Naive thymus-derived CD4-positive, alpha-beta T cell (primary cell): ENCODE measurements at regions of chr11 and their contacts with region 1.

Region 1: DNA sequence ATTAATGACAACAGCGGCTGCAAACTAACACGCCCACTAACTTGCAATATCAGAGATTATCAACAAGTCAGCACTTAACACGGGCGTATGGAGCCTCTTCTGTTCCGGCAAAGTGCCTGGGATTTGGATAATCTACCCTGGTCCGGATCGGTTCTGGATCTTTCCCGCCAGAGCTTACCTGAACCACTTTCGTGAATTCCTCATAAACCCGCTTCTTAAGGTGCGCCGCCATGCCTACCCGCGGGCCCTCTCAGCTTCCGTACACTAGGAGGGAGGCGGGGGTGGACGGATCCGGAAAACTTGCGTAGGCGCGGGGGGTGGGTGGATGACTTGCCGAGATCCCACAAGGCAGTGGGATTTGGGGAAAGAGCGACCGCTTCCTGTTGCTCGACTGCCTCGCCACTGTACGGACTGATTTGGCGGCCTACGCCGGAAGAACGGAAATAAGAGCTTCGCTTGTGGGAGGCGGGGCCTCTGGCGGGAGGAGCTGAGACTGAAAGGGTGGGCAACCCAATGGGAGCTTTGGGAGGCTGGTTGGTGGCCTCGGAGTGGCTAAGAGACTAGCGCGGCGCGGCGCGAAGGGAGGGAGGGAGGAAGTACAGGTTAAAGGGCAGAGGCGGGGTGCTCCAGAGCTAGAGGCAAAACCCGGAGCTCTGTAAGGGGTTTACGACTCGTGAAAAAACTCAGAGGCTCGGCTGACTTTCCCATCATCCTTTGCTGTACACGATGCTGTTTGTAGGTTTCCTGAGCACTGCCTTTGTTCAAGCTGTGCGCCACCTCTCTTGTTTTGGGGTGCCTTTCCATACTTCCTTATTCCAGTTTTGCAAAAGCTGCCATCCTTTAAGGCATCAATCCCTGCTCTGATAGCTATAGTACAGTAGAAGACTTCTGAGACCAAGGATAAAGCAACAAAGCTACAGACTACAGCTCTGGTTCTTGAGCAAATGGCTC is at the start of gene INTS4:
- DNase-seq: peak; percentile 88 to 99 (median 99)
- ATAC-seq: peak; percentile 98
- H3K4me3 ChIP-seq: peak within 1 kb of the TSS; percentile 88
- H3K4me3 Mint-ChIP-seq: peak within 1 kb of the TSS; percentile 87 to 96 (median 94)
- H3K27ac ChIP-seq: peak within 1 kb of the TSS; percentile 84
- H3K27ac Mint-ChIP-seq: peak within 1 kb of the TSS; percentile 86 to 99 (median 97)
- H3K4me1 ChIP-seq: peaks cover 16 to 18% of the 10 kb centered on the region in 2 donors
- H3K4me1 Mint-ChIP-seq: peaks cover 10 to 45% (median 28%) of the 10 kb centered on the region in 7 donors
- H3K27me3 ChIP-seq: no peaks in the 10 kb centered on the region
- H3K27me3 Mint-ChIP-seq: no peaks in the 10 kb centered on the region
- total RNA-seq, gene INTS4: 54.4 to 87.0 (median 65.0) TPM

Region 2: GRCh38 chr11:76380967-76381719 is 1613.5 kb before region 1 on chr11 and contains the starts of genes GVQW3 and THAP12:
- CTCF ChIA-PET with region 1: no interaction called
- POLR2A ChIA-PET with region 1: no interaction called
- intact Hi-C with region 1: loop called in 1 of 2 experiments (anchors 2 kb)
- DNase-seq: peak; percentile 96 to 99 (median 98)
- ATAC-seq: peak; percentile 96
- H3K4me3 ChIP-seq: peak within 1 kb of the TSS; percentile 86
- H3K4me3 Mint-ChIP-seq: peak within 1 kb of the TSS; percentile 92 to 98 (median 97)
- H3K27ac ChIP-seq: peak within 1 kb of the TSS; percentile 72
- H3K27ac Mint-ChIP-seq: peak within 1 kb of the TSS; percentile 75 to 98 (median 92)
- H3K4me1 ChIP-seq: peaks cover 22 to 43% of the 10 kb centered on the region in 2 donors
- H3K4me1 Mint-ChIP-seq: peaks cover 51 to 76% (median 69%) of the 10 kb centered on the region in 7 donors
- H3K27me3 ChIP-seq: no peaks in the 10 kb centered on the region
- H3K27me3 Mint-ChIP-seq: no peaks in the 10 kb centered on the region
- total RNA-seq, gene GVQW3: 3.6 to 9.1 (median 6.7) TPM
- total RNA-seq, gene THAP12: 40.3 to 57.9 (median 51.1) TPM

Region 3: DNA sequence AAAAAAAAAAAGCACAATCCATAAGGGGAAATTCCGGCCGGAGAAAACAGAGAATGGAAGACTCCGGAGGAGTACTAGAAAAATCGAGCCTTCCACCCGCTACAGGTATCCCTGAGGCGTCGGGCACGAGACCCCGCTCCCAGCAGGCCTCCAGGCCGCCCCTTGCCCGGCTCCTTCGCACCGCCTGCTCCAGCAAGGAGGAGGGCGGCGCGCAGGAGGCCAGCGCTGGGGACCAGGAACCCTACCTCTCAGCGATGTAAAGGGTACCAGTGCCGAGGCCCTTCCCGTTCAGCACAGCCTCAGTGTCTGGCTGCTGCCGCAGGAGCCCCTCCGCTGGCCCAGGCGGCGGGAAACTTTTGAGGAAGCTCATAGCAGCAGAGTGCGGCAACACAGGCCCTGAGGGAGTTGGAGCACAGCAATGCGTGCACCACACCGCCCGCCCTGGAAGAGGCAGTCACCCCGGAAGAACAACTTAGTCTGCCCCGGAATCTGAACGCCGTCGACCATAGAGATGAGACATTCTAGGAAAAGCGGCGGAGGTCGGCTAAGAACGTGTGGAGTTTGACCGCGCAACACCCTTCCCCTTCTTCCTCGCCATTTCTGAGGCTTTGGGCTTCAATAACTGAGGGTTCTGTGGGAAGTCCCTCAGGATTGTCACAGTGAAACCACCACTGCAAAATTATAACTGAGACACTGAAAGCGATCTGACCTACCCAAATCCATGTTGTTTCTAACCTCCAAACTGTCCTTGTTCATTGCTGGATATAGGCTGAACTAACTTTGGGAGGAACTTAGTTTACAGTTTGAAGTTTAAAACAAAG is 357.1 kb before region 1 on chr11 and contains the start of gene CLNS1A:
- CTCF ChIA-PET with region 1: no interaction called
- POLR2A ChIA-PET with region 1: interaction called, 9 read pairs
- intact Hi-C with region 1: loop called (anchors 1 kb)
- DNase-seq: peak; percentile 53 to 79 (median 75)
- ATAC-seq: peak; percentile 99
- H3K4me3 ChIP-seq: peak within 1 kb of the TSS; percentile 77
- H3K4me3 Mint-ChIP-seq: peak within 1 kb of the TSS; percentile 91 to 97 (median 96)
- H3K27ac ChIP-seq: peak within 1 kb of the TSS; percentile 87
- H3K27ac Mint-ChIP-seq: peak within 1 kb of the TSS; percentile 86 to 98 (median 95)
- H3K4me1 ChIP-seq: peaks cover 7 to 19% of the 10 kb centered on the region in 2 donors
- H3K4me1 Mint-ChIP-seq: peaks cover 34 to 49% (median 44%) of the 10 kb centered on the region in 7 donors
- H3K27me3 ChIP-seq: no peaks in the 10 kb centered on the region
- H3K27me3 Mint-ChIP-seq: no peaks in the 10 kb centered on the region
- total RNA-seq, gene CLNS1A: 82.2 to 149 (median 113) TPM

Region 4: GRCh38 chr11:77851503-77851902 is 143.2 kb before region 1 on chr11:
- CTCF ChIA-PET with region 1: no interaction called
- POLR2A ChIA-PET with region 1: no interaction called
- intact Hi-C with region 1: no loop called
- DNase-seq: no peak
- ATAC-seq: no peak
- H3K4me3 ChIP-seq: no peak overlapping the region
- H3K4me3 Mint-ChIP-seq: no peak overlapping the region
- H3K27ac ChIP-seq: no peak overlapping the region
- H3K27ac Mint-ChIP-seq: no peak overlapping the region
- H3K4me1 ChIP-seq: no peaks in the 10 kb centered on the region
- H3K4me1 Mint-ChIP-seq: peaks cover 0 to 4% (median 0%) of the 10 kb centered on the region in 7 donors
- H3K27me3 ChIP-seq: no peaks in the 10 kb centered on the region
- H3K27me3 Mint-ChIP-seq: no peaks in the 10 kb centered on the region

Region 5: GRCh38 chr11:78079232-78080083 is 84.8 kb after region 1 on chr11 and contains the start of gene NDUFC2:
- CTCF ChIA-PET with region 1: no interaction called
- POLR2A ChIA-PET with region 1: interaction called, 26 read pairs
- intact Hi-C with region 1: loop called (anchors 1 kb)
- DNase-seq: peak; percentile 37 to 73 (median 61)
- ATAC-seq: peak; percentile 90
- H3K4me3 ChIP-seq: peak within 1 kb of the TSS; percentile 99
- H3K4me3 Mint-ChIP-seq: peak within 1 kb of the TSS; percentile 92 to 98 (median 95)
- H3K27ac ChIP-seq: peak within 1 kb of the TSS; percentile 83
- H3K27ac Mint-ChIP-seq: peak within 1 kb of the TSS; percentile 90 to 97 (median 95)
- H3K4me1 ChIP-seq: peaks cover 38 to 43% of the 10 kb centered on the region in 2 donors
- H3K4me1 Mint-ChIP-seq: peaks cover 41 to 68% (median 53%) of the 10 kb centered on the region in 7 donors
- H3K27me3 ChIP-seq: no peaks in the 10 kb centered on the region
- H3K27me3 Mint-ChIP-seq: no peaks in the 10 kb centered on the region
- total RNA-seq, gene NDUFC2: 43.4 to 189 (median 64.7) TPM

Region 6: DNA sequence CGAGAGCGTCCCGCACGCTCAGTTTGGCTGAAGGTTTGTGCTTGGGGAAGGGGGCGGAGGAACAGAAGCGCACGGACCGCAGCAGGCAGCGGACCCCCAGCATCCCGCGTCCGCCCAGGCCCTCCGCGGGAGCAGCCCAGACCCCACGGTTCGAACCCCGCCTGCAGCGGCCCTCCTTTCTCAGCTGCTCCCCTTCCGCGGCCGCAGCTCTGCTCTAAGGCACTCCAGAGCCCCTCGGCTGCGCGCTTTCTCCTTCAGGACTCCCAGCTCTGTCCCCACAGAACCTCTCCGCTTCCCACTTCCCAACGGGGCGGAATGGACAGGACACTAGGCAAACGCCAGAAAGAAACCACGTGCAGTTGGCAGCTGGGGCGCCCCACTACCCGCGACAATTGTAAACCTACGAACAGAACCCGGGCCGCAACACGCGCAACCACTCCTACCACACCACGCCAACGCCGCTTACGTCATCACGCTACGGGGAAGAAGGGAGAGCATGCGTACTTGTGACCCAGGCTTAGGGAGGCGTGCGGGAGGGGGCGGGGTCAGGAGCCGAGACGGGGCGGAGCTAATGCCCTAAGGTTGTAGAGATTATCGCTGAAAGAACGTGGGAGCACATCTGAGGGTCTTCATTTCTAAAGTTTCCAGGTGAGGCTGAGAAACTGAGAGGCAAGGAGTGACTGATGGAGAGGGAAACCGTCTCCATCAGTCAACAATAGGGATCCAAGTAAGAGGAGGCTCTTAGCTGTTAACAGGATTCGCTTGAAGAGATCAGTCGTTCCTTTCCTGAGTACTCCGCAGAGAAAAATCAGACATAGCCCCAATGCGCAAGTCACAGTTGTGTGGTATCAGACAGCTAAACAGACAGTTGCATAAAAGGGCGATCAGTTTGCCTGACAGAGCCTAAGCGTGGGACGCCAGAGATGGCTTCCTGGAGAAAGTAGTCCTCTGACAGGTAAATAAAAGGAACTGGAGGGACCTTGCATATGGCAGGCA is 580.0 kb after region 1 on chr11 and contains the start of gene NARS2:
- CTCF ChIA-PET with region 1: no interaction called
- POLR2A ChIA-PET with region 1: interaction called, 9 read pairs
- intact Hi-C with region 1: loop called (anchors 1 kb)
- DNase-seq: peak; percentile 89 to 97 (median 96)
- ATAC-seq: peak; percentile 99
- H3K4me3 ChIP-seq: peak within 1 kb of the TSS; percentile 70
- H3K4me3 Mint-ChIP-seq: peak within 1 kb of the TSS; percentile 93 to 100 (median 98)
- H3K27ac ChIP-seq: peak within 1 kb of the TSS; percentile 96
- H3K27ac Mint-ChIP-seq: peak within 1 kb of the TSS; percentile 86 to 99 (median 98)
- H3K4me1 ChIP-seq: peaks cover 7 to 21% of the 10 kb centered on the region in 2 donors
- H3K4me1 Mint-ChIP-seq: peaks cover 24 to 63% (median 50%) of the 10 kb centered on the region in 7 donors
- H3K27me3 ChIP-seq: no peaks in the 10 kb centered on the region
- H3K27me3 Mint-ChIP-seq: peaks cover 0 to 5% (median 0%) of the 10 kb centered on the region in 5 donors
- total RNA-seq, gene NARS2: 9.3 to 21.5 (median 19.7) TPM